Activated CD8-positive, alpha-beta T cell treated with anti-CD3 and anti-CD28 coated beads, Interleukin-2, amount 10 ng/mL, durations not matched to agents 7 days and 5 days (primary cell): ENCODE measurements at regions of chr17 and their contacts with region 1.

Region 1: DNA sequence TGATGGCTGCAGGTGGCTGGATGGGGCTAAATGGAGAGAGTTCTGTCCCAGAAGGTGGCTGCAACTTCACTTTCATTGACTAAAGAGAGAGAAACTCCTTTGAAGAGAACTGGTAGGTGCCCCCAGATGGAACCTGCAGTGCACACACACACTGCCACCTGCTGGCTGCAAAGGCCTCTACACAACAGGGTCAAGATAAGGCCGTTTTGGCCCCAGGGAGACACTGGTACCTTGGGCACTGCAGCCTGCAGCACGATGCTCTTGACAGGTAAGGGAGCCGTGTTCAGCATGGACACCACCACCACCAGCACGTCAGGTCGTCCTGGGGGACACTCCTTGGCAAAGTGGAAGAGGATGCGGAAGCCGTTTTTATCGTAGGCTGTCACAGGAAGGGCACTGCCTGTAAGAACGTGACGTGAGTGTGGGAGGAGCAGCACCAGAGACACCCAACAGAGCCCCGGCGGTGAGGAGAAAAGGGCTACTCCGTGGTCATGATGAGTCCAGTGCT is 22.7 kb downstream of the GGA3 start:
- DNase-seq: peak; percentile 76
- ATAC-seq: peak; percentile 86
- H3K4me3 Mint-ChIP-seq: no peak overlapping the region
- H3K27ac Mint-ChIP-seq: no peak overlapping the region
- H3K4me1 Mint-ChIP-seq: peaks cover 23% of the 10 kb centered on the region
- H3K27me3 Mint-ChIP-seq: no peaks in the 10 kb centered on the region

Region 2: DNA sequence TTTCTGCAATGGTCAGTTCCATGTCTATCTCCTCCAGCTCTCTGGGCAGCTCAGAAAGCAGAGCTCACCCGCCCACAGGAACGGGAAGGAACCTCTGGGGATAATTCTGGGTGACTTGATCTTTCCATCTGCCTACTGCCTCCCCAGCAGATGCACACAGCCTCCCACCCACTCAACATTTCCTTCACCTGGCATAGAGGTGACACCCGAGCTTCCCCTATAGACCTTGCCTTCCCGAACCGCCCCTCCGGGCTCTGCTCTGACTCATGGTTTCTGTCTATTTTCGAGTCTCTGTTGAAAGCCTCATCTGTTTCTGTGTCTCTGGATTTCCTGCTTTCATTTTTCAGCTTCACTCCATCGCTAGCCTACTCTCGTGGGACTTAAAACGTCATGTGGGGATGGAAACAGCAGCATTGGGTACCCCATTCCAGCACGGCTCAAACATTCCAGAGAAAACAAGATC is 11.3 kb after region 1 on chr17:
- CTCF ChIA-PET with region 1: interaction called, 56 read pairs
- POLR2A ChIA-PET with region 1: interaction called, 5 read pairs
- DNase-seq: peak; percentile 75
- ATAC-seq: peak; percentile 94
- H3K4me3 Mint-ChIP-seq: peak overlapping the region; percentile 60
- H3K27ac Mint-ChIP-seq: peak overlapping the region; percentile 86
- H3K4me1 Mint-ChIP-seq: peaks cover 25% of the 10 kb centered on the region
- H3K27me3 Mint-ChIP-seq: no peaks in the 10 kb centered on the region

Region 3: GRCh38 chr17:75338335-75338734 is 99.6 kb after region 1 on chr17:
- CTCF ChIA-PET with region 1: no interaction called
- POLR2A ChIA-PET with region 1: no interaction called
- DNase-seq: no peak
- ATAC-seq: peak; percentile 54
- H3K4me3 Mint-ChIP-seq: peak overlapping the region; percentile 60
- H3K27ac Mint-ChIP-seq: peak overlapping the region; percentile 88
- H3K4me1 Mint-ChIP-seq: peaks cover 81% of the 10 kb centered on the region
- H3K27me3 Mint-ChIP-seq: no peaks in the 10 kb centered on the region